Activated T-helper 1 cell treated with anti-CD3 and anti-CD28 coated beads, Interleukin-12 subunit alpha, Interleukin-12 subunit beta, Interleukin-2, Interleukin-4 antibody, amounts not matched to agents 30 ng/mL and 10 ng/mL and 1 ng/mL, durations not matched to agents 14 hours and 24 hours and 36 hours (primary cell): ENCODE measurements at regions of chr9 and their contacts with region 1.

Region 1: GRCh38 chr9:114487607-114488300 is 17.5 kb downstream of the WHRN start:
- DNase-seq: peak; percentile 55
- H3K4me3 Mint-ChIP-seq: no peak overlapping the region
- H3K27ac Mint-ChIP-seq: peak overlapping the region; percentile 20
- H3K4me1 Mint-ChIP-seq: peaks cover 29% of the 10 kb centered on the region
- H3K27me3 Mint-ChIP-seq: no peaks in the 10 kb centered on the region

Region 2: GRCh38 chr9:114405294-114406034 is 82.3 kb before region 1 on chr9:
- intact Hi-C with region 1: loop called (anchors 1 kb)
- DNase-seq: peak; percentile 71
- H3K4me3 Mint-ChIP-seq: no peak overlapping the region
- H3K27ac Mint-ChIP-seq: no peak overlapping the region
- H3K4me1 Mint-ChIP-seq: peaks cover 6% of the 10 kb centered on the region
- H3K27me3 Mint-ChIP-seq: peaks cover 3% of the 10 kb centered on the region

Region 3: GRCh38 chr9:114574438-114574837 is 86.7 kb after region 1 on chr9:
- intact Hi-C with region 1: no loop called
- DNase-seq: no peak
- H3K4me3 Mint-ChIP-seq: no peak overlapping the region
- H3K27ac Mint-ChIP-seq: no peak overlapping the region
- H3K4me1 Mint-ChIP-seq: no peaks in the 10 kb centered on the region
- H3K27me3 Mint-ChIP-seq: peaks cover 19% of the 10 kb centered on the region

Region 4: DNA sequence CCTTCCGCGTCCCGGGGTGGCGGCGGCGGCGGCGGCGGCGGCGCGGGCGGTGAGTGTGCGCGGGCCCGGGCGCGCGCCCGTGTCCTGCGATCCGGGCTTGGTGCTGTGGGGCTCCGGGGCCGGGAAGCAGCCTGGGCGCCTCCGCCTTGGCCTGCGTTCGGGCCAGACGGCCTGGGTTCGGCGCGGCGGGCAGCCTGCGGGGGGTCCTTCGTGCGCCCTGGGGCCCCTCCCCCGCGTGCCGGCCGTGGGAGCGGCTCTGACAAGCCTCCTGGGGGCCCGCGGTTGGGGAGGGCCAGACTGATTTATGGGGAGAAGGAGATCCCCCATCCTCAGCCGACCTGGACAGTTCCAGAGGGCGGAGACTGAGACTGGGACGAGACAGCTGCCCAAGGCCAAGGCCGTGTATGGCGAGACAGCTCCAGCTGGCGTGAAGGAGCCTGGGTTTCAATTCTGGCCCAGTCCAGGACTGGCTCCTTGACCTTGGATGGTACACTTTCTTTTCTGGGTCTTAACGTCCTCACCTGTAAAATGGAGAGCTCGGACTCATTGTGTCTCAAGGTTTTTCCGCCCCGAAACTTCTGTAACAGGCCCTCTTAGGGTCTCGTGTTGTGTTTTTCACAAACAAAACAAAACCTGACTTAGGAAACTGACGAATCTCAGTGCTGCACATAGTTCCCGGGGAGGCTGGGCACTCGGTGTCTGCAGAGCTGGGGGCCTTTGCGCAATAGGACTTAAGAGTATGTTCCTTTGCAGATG is 123.9 kb after region 1 on chr9:
- intact Hi-C with region 1: loop called (anchors 2 kb)
- DNase-seq: no peak
- H3K4me3 Mint-ChIP-seq: peak overlapping the region; percentile 89
- H3K27ac Mint-ChIP-seq: peak overlapping the region; percentile 86
- H3K4me1 Mint-ChIP-seq: peaks cover 50% of the 10 kb centered on the region
- H3K27me3 Mint-ChIP-seq: peaks cover 2% of the 10 kb centered on the region

Region 5: GRCh38 chr9:115008536-115009270 is 520.9 kb after region 1 on chr9:
- intact Hi-C with region 1: loop called (anchors 10 kb)
- DNase-seq: peak; percentile 23
- H3K4me3 Mint-ChIP-seq: no peak overlapping the region
- H3K27ac Mint-ChIP-seq: no peak overlapping the region
- H3K4me1 Mint-ChIP-seq: peaks cover 97% of the 10 kb centered on the region
- H3K27me3 Mint-ChIP-seq: no peaks in the 10 kb centered on the region